ENCODE measurements at regions of chr18 and their contacts with region 1.

Region 1: GRCh38 chr18:58135701-58136331 is 91.8 kb downstream of the NEDD4L start:
- DNase-seq: peak; percentile 68
- ATAC-seq: peak; percentile 79
- H3K4me3 Mint-ChIP-seq: no peak overlapping the region
- H3K27ac Mint-ChIP-seq: no peak overlapping the region
- H3K4me1 Mint-ChIP-seq: peaks cover 15% of the 10 kb centered on the region
- H3K27me3 Mint-ChIP-seq: peaks cover 19% of the 10 kb centered on the region
- CTCF ChIP-seq: peak; percentile 74

Region 2: DNA sequence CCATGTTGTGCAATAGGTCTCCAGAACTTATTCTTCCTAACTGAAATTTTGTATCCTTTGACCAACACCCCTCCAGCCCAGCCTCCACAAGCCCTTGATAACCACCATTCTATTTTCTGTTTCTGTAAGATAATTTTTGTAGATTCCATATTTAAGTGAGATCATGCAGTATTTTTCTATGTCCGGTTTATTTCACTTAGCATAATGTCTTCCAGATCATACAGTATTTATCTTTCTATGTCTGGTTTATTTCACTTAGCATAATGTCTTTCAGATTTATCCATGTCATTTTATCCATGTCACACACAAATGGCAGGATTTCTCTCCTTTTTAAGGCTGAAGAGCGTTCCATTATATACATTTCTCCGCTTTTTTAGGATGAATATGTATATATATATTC is 725.1 kb before region 1 on chr18:
- CTCF ChIA-PET with region 1: no interaction called
- POLR2A ChIA-PET with region 1: no interaction called
- intact Hi-C with region 1: no loop called
- DNase-seq: no peak
- ATAC-seq: no peak
- H3K4me3 Mint-ChIP-seq: no peak overlapping the region
- H3K27ac Mint-ChIP-seq: no peak overlapping the region
- H3K4me1 Mint-ChIP-seq: no peaks in the 10 kb centered on the region
- H3K27me3 Mint-ChIP-seq: peaks cover 22% of the 10 kb centered on the region
- CTCF ChIP-seq: no peak

Region 3: GRCh38 chr18:57915865-57916582 is 219.8 kb before region 1 on chr18:
- CTCF ChIA-PET with region 1: no interaction called
- POLR2A ChIA-PET with region 1: no interaction called
- intact Hi-C with region 1: no loop called
- DNase-seq: peak; percentile 54
- ATAC-seq: peak; percentile 79
- H3K4me3 Mint-ChIP-seq: no peak overlapping the region
- H3K27ac Mint-ChIP-seq: no peak overlapping the region
- H3K4me1 Mint-ChIP-seq: peaks cover 11% of the 10 kb centered on the region
- H3K27me3 Mint-ChIP-seq: peaks cover 5% of the 10 kb centered on the region
- CTCF ChIP-seq: no peak

Region 4: DNA sequence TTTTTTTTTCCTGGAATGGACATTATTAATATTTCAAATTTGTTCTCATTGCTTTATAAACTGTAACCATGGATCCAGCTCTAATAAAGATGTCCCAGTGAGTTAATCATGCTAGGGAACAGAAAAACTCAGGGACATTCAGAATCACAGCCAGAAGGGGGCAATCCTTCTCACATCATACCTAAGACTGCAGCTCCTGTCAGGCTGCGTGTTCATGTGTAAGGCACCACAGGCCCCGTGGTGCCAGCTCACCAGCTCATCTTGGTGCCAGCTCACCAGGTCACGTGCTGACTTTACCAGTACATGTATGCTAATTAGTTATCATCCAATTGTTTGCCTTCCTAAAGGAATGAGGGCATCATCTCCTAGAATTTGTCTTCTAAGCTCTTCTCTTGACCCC is 176.5 kb before region 1 on chr18:
- CTCF ChIA-PET with region 1: interaction called, 10 read pairs
- POLR2A ChIA-PET with region 1: no interaction called
- intact Hi-C with region 1: no loop called
- DNase-seq: peak; percentile 10
- ATAC-seq: no peak
- H3K4me3 Mint-ChIP-seq: no peak overlapping the region
- H3K27ac Mint-ChIP-seq: no peak overlapping the region
- H3K4me1 Mint-ChIP-seq: no peaks in the 10 kb centered on the region
- H3K27me3 Mint-ChIP-seq: peaks cover 18% of the 10 kb centered on the region
- CTCF ChIP-seq: no peak

Region 5: DNA sequence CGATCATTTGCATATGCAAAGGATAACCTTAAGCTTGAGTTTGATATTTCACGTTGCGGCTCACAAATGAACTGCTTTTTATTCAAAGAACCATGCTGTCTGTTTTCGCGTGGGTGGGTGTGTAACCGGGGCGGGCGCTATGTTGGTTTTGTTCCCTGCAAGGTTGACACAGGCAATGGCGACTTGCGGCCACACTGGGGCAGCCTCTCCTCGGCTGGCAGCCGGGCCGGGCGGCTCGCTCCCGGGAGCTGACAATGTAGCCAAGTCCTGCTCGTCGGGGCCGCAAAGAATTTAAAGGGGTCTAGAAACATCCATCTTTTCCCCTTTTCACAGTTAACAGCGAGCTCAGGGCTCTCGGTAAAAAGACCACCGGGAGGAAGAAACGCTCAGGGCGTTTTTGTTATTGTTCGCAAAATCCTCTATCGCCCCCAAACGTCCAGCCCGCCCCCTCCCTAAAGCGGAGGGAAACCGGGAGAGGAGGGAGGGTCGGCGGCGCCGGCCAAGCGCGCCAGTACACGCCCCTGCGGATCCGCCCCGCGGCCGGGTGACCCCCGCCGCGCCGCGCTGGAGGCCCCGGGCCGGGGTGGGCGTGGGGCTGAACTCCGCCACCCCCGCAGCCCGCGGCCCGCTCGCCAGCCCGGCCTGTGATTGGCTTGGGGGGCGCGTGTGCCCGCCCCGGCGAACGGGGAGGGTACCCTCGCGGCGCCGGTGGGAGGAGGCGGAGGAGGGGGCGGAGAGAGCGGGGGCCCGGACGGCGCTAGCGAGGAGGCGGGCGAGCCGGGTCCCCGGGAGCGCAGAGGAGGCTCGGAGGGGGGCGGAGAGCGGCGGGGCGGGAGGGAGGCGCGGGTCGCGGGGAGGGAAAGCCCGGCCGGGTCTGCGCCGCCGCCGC is 92.1 kb before region 1 on chr18 and contains the start of gene NEDD4L:
- CTCF ChIA-PET with region 1: interaction called, 15 read pairs
- POLR2A ChIA-PET with region 1: no interaction called
- intact Hi-C with region 1: no loop called
- DNase-seq: peak; percentile 95
- ATAC-seq: peak; percentile 86
- H3K4me3 Mint-ChIP-seq: peak within 1 kb of the TSS; percentile 93
- H3K27ac Mint-ChIP-seq: peak within 1 kb of the TSS; percentile 65
- H3K4me1 Mint-ChIP-seq: peaks cover 29% of the 10 kb centered on the region
- H3K27me3 Mint-ChIP-seq: peaks cover 15% of the 10 kb centered on the region
- CTCF ChIP-seq: peak; percentile 66
- total RNA-seq, gene NEDD4L: 7.5 to 8.5 TPM

Region 6: GRCh38 chr18:58117786-58118403 is 17.9 kb before region 1 on chr18:
- CTCF ChIA-PET with region 1: interaction called, 15 read pairs
- POLR2A ChIA-PET with region 1: interaction called, 3 read pairs
- intact Hi-C with region 1: no loop called
- DNase-seq: no peak
- ATAC-seq: no peak
- H3K4me3 Mint-ChIP-seq: no peak overlapping the region
- H3K27ac Mint-ChIP-seq: no peak overlapping the region
- H3K4me1 Mint-ChIP-seq: peaks cover 6% of the 10 kb centered on the region
- H3K27me3 Mint-ChIP-seq: no peaks in the 10 kb centered on the region
- CTCF ChIP-seq: no peak

Region 7: GRCh38 chr18:58213440-58213839 is 77.6 kb after region 1 on chr18:
- CTCF ChIA-PET with region 1: no interaction called
- POLR2A ChIA-PET with region 1: no interaction called
- intact Hi-C with region 1: no loop called
- DNase-seq: no peak
- ATAC-seq: no peak
- H3K4me3 Mint-ChIP-seq: no peak overlapping the region
- H3K27ac Mint-ChIP-seq: no peak overlapping the region
- H3K4me1 Mint-ChIP-seq: peaks cover 16% of the 10 kb centered on the region
- H3K27me3 Mint-ChIP-seq: peaks cover 14% of the 10 kb centered on the region
- CTCF ChIP-seq: no peak

Region 8: DNA sequence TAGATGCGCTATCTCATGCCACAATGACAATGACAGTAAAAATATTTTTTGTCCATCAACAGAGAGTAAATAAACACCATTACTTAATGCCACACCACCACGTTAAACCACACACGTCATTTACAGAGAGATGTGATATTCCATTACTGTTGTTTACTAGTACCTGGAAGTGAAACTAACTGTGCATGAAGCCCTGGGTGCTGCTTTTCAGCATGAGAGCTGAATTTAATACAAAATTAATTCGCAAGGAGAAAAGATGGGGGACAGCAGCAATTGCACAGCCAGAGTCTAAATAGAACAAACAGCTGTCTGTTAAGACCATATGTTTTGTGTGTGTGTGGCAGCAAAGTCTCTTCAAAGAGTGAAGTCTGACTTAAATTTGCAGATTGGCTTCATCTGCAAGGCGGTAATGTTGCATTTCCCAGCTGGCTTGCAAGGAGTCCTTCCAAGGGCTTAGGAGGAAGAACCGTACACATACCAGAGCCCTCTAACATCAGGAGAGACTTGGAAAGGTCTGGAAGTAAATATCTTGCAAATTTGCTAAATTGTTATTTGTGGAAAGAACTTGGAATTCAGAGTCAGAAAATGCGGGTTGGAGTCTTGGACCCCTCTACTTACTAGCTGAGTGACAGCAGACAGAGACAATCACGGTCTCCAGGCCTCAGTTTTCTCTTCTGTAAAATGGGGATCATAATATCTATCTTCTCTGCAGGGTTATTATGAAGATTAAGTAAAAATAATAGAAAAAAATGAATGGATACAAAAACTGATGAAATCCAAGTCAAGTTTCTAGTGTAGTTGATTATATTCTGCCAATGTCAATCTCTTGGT is 365.5 kb after region 1 on chr18:
- CTCF ChIA-PET with region 1: no interaction called
- POLR2A ChIA-PET with region 1: no interaction called
- intact Hi-C with region 1: no loop called
- DNase-seq: no peak
- ATAC-seq: no peak
- H3K4me3 Mint-ChIP-seq: no peak overlapping the region
- H3K27ac Mint-ChIP-seq: no peak overlapping the region
- H3K4me1 Mint-ChIP-seq: peaks cover 12% of the 10 kb centered on the region
- H3K27me3 Mint-ChIP-seq: peaks cover 2% of the 10 kb centered on the region
- CTCF ChIP-seq: no peak